Mammary epithelial cell (primary cell): ENCODE measurements at regions of chr1 and their contacts with region 1.

Region 1: GRCh38 chr1:29793101-29793546 is 556.8 kb downstream of the PTPRU start:
- DNase-seq: peak; percentile 65
- H3K4me3 ChIP-seq: no peak overlapping the region
- H3K27ac ChIP-seq: no peak overlapping the region
- H3K4me1 ChIP-seq: peaks cover 9% of the 10 kb centered on the region
- H3K27me3 ChIP-seq: peaks cover 3% of the 10 kb centered on the region
- CTCF ChIP-seq: peak; percentile 94 to 97

Region 2: GRCh38 chr1:29703596-29704370 is 89.3 kb before region 1 on chr1:
- CTCF ChIA-PET with region 1: no interaction called
- dilution Hi-C with region 1: no loop called
- in situ Hi-C with region 1: no loop called
- intact Hi-C with region 1: loop called (anchors 1 kb)
- DNase-seq: peak; percentile 45
- H3K4me3 ChIP-seq: no peak overlapping the region
- H3K27ac ChIP-seq: no peak overlapping the region
- H3K4me1 ChIP-seq: peaks cover 16% of the 10 kb centered on the region
- H3K27me3 ChIP-seq: no peaks in the 10 kb centered on the region
- CTCF ChIP-seq: peak; percentile 91 to 95

Region 3: GRCh38 chr1:29708901-29709710 is 84.0 kb before region 1 on chr1:
- CTCF ChIA-PET with region 1: no interaction called
- dilution Hi-C with region 1: loop called (anchors 5 kb)
- in situ Hi-C with region 1: no loop called
- intact Hi-C with region 1: loop called (anchors 1 kb)
- DNase-seq: peak; percentile 86
- H3K4me3 ChIP-seq: no peak overlapping the region
- H3K27ac ChIP-seq: peak overlapping the region; percentile 85
- H3K4me1 ChIP-seq: peaks cover 58% of the 10 kb centered on the region
- H3K27me3 ChIP-seq: no peaks in the 10 kb centered on the region
- CTCF ChIP-seq: no peak

Region 4: GRCh38 chr1:29849038-29849750 is 56.1 kb after region 1 on chr1:
- CTCF ChIA-PET with region 1: no interaction called
- dilution Hi-C with region 1: no loop called
- in situ Hi-C with region 1: no loop called
- intact Hi-C with region 1: loop called (anchors 1 kb)
- DNase-seq: peak; percentile 41
- H3K4me3 ChIP-seq: no peak overlapping the region
- H3K27ac ChIP-seq: no peak overlapping the region
- H3K4me1 ChIP-seq: no peaks in the 10 kb centered on the region
- H3K27me3 ChIP-seq: peaks cover 2% of the 10 kb centered on the region
- CTCF ChIP-seq: peak; percentile 49 to 65

Region 5: GRCh38 chr1:29864431-29865022 is 71.4 kb after region 1 on chr1:
- CTCF ChIA-PET with region 1: no interaction called
- dilution Hi-C with region 1: loop called (anchors 5 kb)
- in situ Hi-C with region 1: no loop called
- intact Hi-C with region 1: no loop called
- DNase-seq: no peak
- H3K4me3 ChIP-seq: no peak overlapping the region
- H3K27ac ChIP-seq: no peak overlapping the region
- H3K4me1 ChIP-seq: no peaks in the 10 kb centered on the region
- H3K27me3 ChIP-seq: peaks cover 3% of the 10 kb centered on the region
- CTCF ChIP-seq: no peak

Region 6: GRCh38 chr1:29912425-29912824 is 119.3 kb after region 1 on chr1:
- CTCF ChIA-PET with region 1: no interaction called
- dilution Hi-C with region 1: no loop called
- in situ Hi-C with region 1: no loop called
- intact Hi-C with region 1: loop called (anchors 2 kb)
- DNase-seq: peak; percentile 30
- H3K4me3 ChIP-seq: no peak overlapping the region
- H3K27ac ChIP-seq: no peak overlapping the region
- H3K4me1 ChIP-seq: no peaks in the 10 kb centered on the region
- H3K27me3 ChIP-seq: no peaks in the 10 kb centered on the region
- CTCF ChIP-seq: peak; percentile 41 to 67

Region 7: GRCh38 chr1:30111431-30111830 is 318.3 kb after region 1 on chr1:
- CTCF ChIA-PET with region 1: no interaction called
- dilution Hi-C with region 1: no loop called
- in situ Hi-C with region 1: no loop called
- intact Hi-C with region 1: loop called (anchors 1 kb)
- DNase-seq: peak; percentile 16
- H3K4me3 ChIP-seq: no peak overlapping the region
- H3K27ac ChIP-seq: no peak overlapping the region
- H3K4me1 ChIP-seq: no peaks in the 10 kb centered on the region
- H3K27me3 ChIP-seq: no peaks in the 10 kb centered on the region
- CTCF ChIP-seq: peak; percentile 43 to 69